ENCODE measurements at regions of chr22 and their contacts with region 1.

Region 1: DNA sequence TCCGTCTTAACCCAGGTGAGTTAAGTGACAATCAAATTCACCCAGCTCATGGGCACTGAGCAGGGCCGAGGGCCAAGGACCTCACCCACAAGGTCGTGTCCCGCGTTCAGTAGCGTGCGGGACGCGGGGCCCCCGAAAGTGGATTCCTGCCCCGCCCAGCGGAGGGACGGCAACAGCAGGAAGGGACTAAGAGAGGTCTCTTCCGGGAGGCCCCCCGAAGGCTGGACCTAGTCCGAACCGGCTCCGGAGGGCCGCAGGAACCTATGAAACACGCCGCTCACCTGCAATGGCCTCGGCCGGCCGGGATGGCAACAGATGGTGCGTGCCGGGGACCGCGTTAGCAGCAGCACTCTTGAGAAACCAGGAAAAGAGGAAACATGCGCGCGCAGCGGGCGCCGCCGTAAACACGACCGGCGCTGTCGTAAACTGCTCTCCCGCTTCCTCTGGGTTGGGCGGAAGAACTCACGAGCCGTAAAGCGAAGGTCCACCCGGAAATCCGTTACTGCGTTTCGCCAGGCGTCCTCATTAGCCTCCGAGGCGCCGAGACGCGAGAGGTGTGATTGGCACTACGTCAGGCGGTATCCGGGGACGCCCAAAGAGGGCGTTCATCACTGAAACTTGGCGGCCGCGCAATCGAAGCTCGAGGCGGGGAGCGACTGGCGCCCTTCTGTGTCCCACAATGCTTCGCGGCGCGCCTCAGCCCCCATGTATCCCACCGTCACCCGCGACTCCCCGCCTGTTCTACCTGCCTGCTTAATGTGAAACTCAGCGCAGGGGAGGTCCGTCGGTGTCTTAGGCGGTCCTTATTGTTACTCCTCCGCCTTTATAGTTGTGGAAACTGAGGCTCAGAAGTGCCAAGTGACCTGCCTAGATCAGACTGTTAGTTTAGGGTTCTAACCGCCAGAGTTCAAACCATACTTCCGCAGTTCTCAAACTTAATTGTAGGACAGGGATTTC is at the start of gene EIF3D:
- DNase-seq: peak; percentile 93 to 98 (median 96)
- H3K4me3 ChIP-seq: peak within 1 kb of the TSS; percentile 46 to 99 (median 84)
- H3K27ac ChIP-seq: peak within 1 kb of the TSS; percentile 52 to 97 (median 90)
- H3K27me3 ChIP-seq: no peaks in the 10 kb centered on the region
- CTCF ChIP-seq: peak in 49 of 56 donors; percentile 12 to 61 (median 35)
- total RNA-seq, gene EIF3D: 41.6 to 81.0 (median 63.3) TPM

Region 2: GRCh38 chr22:36481393-36482168 is 47.5 kb before region 1 on chr22 and contains the start of gene TXN2:
- intact Hi-C with region 1: loop called (anchors 2 kb)
- DNase-seq: peak; percentile 87 to 96 (median 94)
- H3K4me3 ChIP-seq: peak within 1 kb of the TSS; percentile 55 to 99 (median 89)
- H3K27ac ChIP-seq: peak within 1 kb of the TSS; percentile 91 to 100 (median 100)
- H3K27me3 ChIP-seq: no peaks in the 10 kb centered on the region
- CTCF ChIP-seq: peak in 8 of 56 donors; percentile 11 to 31 (median 14)
- total RNA-seq, gene TXN2: 47.2 to 80.9 (median 65.4) TPM

Region 3: GRCh38 chr22:36506637-36507517 is 22.2 kb before region 1 on chr22 and contains the start of gene FOXRED2:
- intact Hi-C with region 1: loop called (anchors 1 kb)
- DNase-seq: peak; percentile 75 to 95 (median 84)
- H3K4me3 ChIP-seq: peak within 1 kb of the TSS; percentile 57 to 87 (median 77)
- H3K27ac ChIP-seq: peak within 1 kb of the TSS; percentile 48 to 96 (median 87)
- H3K27me3 ChIP-seq: no peaks in the 10 kb centered on the region
- CTCF ChIP-seq: peak in 14 of 56 donors; percentile 9 to 45 (median 22)
- total RNA-seq, gene FOXRED2: 32.6 to 77.4 (median 49.9) TPM